Endothelial cell of umbilical vein (primary cell): ENCODE measurements at regions of chr6 and their contacts with region 1.

Region 1: GRCh38 chr6:41424370-41425058 is 89.1 kb downstream of the NCR2 start:
- DNase-seq: peak; percentile 77
- H3K4me3 ChIP-seq: no peak overlapping the region
- H3K27ac ChIP-seq: no peak overlapping the region
- H3K4me1 ChIP-seq: no peaks in the 10 kb centered on the region
- H3K27me3 ChIP-seq: peaks cover 37 to 46% of the 10 kb centered on the region in 2 experiments
- CTCF ChIP-seq: peak; percentile 70 to 78
- POLR2A ChIP-seq: no peak

Region 2: GRCh38 chr6:41445261-41445660 is 20.7 kb after region 1 on chr6:
- CTCF ChIA-PET with region 1: interaction called, 12 read pairs
- POLR2A ChIA-PET with region 1: no interaction called
- dilution Hi-C with region 1: no loop called
- intact Hi-C with region 1: no loop called
- DNase-seq: no peak
- H3K4me3 ChIP-seq: no peak overlapping the region
- H3K27ac ChIP-seq: no peak overlapping the region
- H3K4me1 ChIP-seq: no peaks in the 10 kb centered on the region
- H3K27me3 ChIP-seq: peaks cover 27 to 29% of the 10 kb centered on the region in 2 experiments
- CTCF ChIP-seq: no peak
- POLR2A ChIP-seq: no peak

Region 3: GRCh38 chr6:41591859-41592502 is 167.5 kb after region 1 on chr6:
- CTCF ChIA-PET with region 1: interaction called, 84 read pairs
- POLR2A ChIA-PET with region 1: no interaction called
- dilution Hi-C with region 1: no loop called
- intact Hi-C with region 1: loop called (anchors 1 kb)
- DNase-seq: peak; percentile 73
- H3K4me3 ChIP-seq: no peak overlapping the region
- H3K27ac ChIP-seq: no peak overlapping the region
- H3K4me1 ChIP-seq: no peaks in the 10 kb centered on the region
- H3K27me3 ChIP-seq: no peaks in the 10 kb centered on the region
- CTCF ChIP-seq: peak; percentile 89 to 93
- POLR2A ChIP-seq: no peak